ENCODE measurements at regions of chr2 and their contacts with region 1.

Region 1: GRCh38 chr2:114201781-114202180 is 240.7 kb upstream of the DPP10 start:
- DNase-seq: no peak
- ATAC-seq: no peak
- H3K4me3 ChIP-seq: no peak overlapping the region
- H3K4me3 Mint-ChIP-seq: no peak overlapping the region
- H3K27ac ChIP-seq: no peak overlapping the region
- H3K27ac Mint-ChIP-seq: no peak overlapping the region
- H3K4me1 ChIP-seq: no peaks in the 10 kb centered on the region
- H3K4me1 Mint-ChIP-seq: no peaks in the 10 kb centered on the region
- H3K27me3 ChIP-seq: no peaks in the 10 kb centered on the region
- H3K27me3 Mint-ChIP-seq: peaks cover 11 to 20% of the 10 kb centered on the region in 2 donors

Region 2: GRCh38 chr2:114011713-114012112 is 190.1 kb before region 1 on chr2:
- CTCF ChIA-PET with region 1: no interaction called
- POLR2A ChIA-PET with region 1: no interaction called
- DNase-seq: no peak
- ATAC-seq: no peak
- H3K4me3 ChIP-seq: no peak overlapping the region
- H3K4me3 Mint-ChIP-seq: no peak overlapping the region
- H3K27ac ChIP-seq: no peak overlapping the region
- H3K27ac Mint-ChIP-seq: peak overlapping the region in 1 of 2 donors; percentile 39
- H3K4me1 ChIP-seq: no peaks in the 10 kb centered on the region
- H3K4me1 Mint-ChIP-seq: no peaks in the 10 kb centered on the region
- H3K27me3 ChIP-seq: peaks cover 0 to 4% of the 10 kb centered on the region in 2 experiments
- H3K27me3 Mint-ChIP-seq: peaks cover 5 to 7% of the 10 kb centered on the region in 2 donors

Region 3: DNA sequence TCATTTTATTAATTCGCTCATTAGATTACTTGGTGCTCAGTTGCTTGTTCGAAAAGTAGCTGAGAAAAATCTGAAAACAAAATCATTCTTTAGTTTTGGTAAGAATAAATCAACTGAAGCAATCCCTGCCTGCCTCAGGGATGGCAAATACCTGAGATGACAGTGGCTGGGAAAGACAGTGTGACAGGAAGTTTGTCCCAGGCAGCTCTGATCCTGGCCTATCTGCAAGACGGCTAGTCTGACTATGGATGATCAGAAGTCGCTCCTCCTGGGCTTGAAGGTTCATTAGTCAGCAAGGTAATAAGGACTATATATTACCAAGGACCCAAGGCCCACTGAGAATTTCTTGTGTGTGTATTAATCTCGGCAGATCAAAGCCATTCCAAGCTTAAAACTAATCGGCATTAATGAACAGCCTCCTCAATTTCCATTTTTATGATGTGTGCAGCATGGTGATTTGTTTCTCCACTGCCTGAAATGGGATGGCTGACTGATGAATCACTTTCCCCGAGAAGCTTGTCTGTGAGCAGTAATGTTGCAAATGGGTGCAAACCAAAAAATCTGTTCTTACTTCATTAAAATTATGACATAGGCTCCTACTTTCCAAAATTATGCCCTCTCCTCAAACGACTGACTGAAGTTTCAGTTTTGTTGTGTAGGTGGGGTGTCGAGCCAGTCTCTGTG is 112.0 kb before region 1 on chr2:
- CTCF ChIA-PET with region 1: no interaction called
- POLR2A ChIA-PET with region 1: no interaction called
- DNase-seq: no peak
- ATAC-seq: no peak
- H3K4me3 ChIP-seq: no peak overlapping the region
- H3K4me3 Mint-ChIP-seq: no peak overlapping the region
- H3K27ac ChIP-seq: no peak overlapping the region
- H3K27ac Mint-ChIP-seq: no peak overlapping the region
- H3K4me1 ChIP-seq: no peaks in the 10 kb centered on the region
- H3K4me1 Mint-ChIP-seq: no peaks in the 10 kb centered on the region
- H3K27me3 ChIP-seq: no peaks in the 10 kb centered on the region
- H3K27me3 Mint-ChIP-seq: peaks cover 6 to 18% of the 10 kb centered on the region in 2 donors

Region 4: DNA sequence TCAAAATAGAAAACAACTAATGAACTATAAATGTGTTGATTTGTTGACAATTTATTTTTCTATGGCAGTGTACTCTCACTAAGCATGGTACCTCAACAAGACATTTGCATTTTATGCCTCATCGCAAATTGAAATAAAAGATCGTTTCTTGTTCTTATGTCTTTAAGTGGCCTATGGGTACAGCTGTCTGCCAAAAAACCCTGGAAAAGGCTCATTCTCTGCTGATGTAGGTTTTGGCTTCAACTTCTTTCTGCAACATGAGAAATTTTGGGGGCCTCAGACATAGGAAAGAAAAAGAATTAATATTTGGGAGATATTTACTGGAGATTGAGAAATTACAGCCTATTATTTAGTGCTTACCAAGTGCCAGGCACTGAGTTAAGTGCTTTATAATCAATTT is 35.5 kb after region 1 on chr2:
- CTCF ChIA-PET with region 1: no interaction called
- POLR2A ChIA-PET with region 1: no interaction called
- DNase-seq: no peak
- ATAC-seq: no peak
- H3K4me3 ChIP-seq: no peak overlapping the region
- H3K4me3 Mint-ChIP-seq: no peak overlapping the region
- H3K27ac ChIP-seq: no peak overlapping the region
- H3K27ac Mint-ChIP-seq: no peak overlapping the region
- H3K4me1 ChIP-seq: no peaks in the 10 kb centered on the region
- H3K4me1 Mint-ChIP-seq: no peaks in the 10 kb centered on the region
- H3K27me3 ChIP-seq: peaks cover 0 to 7% of the 10 kb centered on the region in 2 experiments
- H3K27me3 Mint-ChIP-seq: peaks cover 34 to 36% of the 10 kb centered on the region in 2 donors

Region 5: DNA sequence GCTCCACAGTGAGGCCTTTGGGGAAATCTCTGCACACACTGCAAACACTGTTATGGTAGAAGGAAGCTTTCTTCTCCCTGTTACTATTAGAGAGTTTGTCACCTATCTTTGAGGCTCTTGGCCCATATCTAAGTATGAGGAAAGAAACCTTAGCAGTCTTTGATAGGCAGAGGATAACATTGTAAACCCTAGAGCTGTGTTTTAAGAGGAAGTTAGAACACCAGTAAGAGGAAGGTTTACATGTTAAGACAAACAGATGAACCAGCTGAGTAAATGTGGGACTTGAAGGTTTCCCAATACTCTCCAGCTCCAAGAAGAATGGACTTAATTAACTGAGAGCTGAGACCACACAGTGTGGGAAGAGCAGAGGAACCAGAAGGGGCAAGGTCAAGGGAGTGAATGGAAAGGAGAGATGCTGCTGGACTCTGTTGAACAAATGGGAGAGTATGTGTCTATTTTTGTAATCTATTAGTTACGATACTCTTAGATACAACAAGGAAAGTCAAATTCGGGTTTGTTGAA is 497.7 kb after region 1 on chr2:
- CTCF ChIA-PET with region 1: interaction called in 1 of 2 experiments, 11 read pairs
- POLR2A ChIA-PET with region 1: no interaction called
- DNase-seq: no peak
- ATAC-seq: no peak
- H3K4me3 ChIP-seq: no peak overlapping the region
- H3K4me3 Mint-ChIP-seq: no peak overlapping the region
- H3K27ac ChIP-seq: no peak overlapping the region
- H3K27ac Mint-ChIP-seq: no peak overlapping the region
- H3K4me1 ChIP-seq: peaks cover 0 to 2% of the 10 kb centered on the region in 2 experiments
- H3K4me1 Mint-ChIP-seq: no peaks in the 10 kb centered on the region
- H3K27me3 ChIP-seq: no peaks in the 10 kb centered on the region
- H3K27me3 Mint-ChIP-seq: no peaks in the 10 kb centered on the region